ENCODE measurements at regions of chr15 and their contacts with region 1.

Region 1: DNA sequence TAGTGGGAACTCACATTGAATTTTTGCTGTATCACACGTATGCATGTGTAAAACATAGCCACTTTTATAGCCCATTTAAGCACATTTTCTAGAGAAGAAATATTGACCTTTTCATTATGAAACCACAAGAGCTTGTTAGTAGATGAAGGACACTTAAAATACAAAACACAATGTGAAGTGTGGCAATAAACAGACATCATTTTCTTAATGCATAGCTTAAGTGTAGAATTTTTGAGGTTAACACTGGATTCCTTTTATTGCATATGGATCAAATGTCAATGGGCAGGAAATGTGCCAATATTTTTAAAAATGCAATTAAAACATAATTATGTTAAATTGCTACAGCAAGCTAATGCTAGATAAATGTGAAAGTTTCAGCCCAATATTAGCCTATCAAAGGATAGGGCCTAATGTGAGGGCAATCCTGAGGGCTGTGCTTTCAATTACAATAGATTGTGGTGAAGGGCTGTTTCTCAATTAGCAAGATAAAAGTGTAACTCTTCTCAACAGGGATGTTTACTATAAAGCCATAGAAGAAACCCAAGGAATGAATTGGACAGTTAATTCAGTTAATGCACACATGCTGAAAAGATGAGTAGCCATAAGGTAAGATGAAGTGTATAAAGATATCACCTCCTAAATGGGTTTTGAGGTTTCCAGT is 489.0 kb upstream of the CDIN1 start:
- DNase-seq: no peak

Region 2: DNA sequence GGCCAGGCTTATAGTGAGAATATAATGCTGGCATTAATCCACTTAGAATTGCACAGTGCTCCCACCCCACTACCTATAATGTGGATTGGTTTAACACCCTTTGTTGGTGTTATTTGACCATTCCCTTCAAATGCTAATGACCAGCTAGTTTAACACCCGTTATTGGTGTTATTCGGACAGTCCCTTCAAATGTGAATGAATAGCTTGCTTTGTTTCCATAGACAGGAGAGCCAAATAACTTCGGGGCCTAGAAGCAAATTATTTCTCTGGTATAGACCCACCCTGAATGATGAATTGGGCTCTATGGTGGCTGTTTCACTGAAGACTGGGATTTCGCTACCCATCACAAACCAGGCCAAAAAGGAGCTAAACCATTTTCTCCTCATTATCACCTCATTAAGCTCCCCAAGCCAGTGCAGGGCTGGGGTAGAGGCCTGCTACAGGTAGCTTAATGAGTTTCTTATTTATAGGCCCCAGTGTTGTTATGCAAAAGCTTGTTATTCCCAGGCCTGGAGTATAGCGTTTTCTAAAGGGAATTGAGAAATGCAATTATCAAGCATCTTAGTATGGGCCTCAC is 50.3 kb before region 1 on chr15:
- intact Hi-C with region 1: loop called (anchors 2 kb)
- DNase-seq: no peak

Measured in cardiac septum (tissue), 1 donor.